ENCODE measurements at regions of chr17 and their contacts with region 1.

Region 1: GRCh38 chr17:72592242-72592966 is 471.6 kb downstream of the SOX9 start:
- DNase-seq: peak; percentile 90 to 97
- ATAC-seq: peak; percentile 72 to 86
- H3K4me3 ChIP-seq: peak overlapping the region; percentile 78
- H3K27ac ChIP-seq: peak overlapping the region; percentile 80 to 91
- H3K4me1 ChIP-seq: peaks cover 28% of the 10 kb centered on the region
- CTCF ChIP-seq: no peak
- EP300 ChIP-seq: no peak
- POLR2A ChIP-seq: peak; percentile 100
- RAD21 ChIP-seq: peak; percentile 28 to 67; a peak in 4 of 5 replicates

Region 2: GRCh38 chr17:72318131-72318530 is 274.3 kb before region 1 on chr17:
- CTCF ChIA-PET with region 1: no interaction called
- POLR2A ChIA-PET with region 1: no interaction called
- DNase-seq: no peak
- ATAC-seq: no peak
- H3K4me3 ChIP-seq: no peak overlapping the region
- H3K27ac ChIP-seq: no peak overlapping the region
- H3K4me1 ChIP-seq: peaks cover 4% of the 10 kb centered on the region; the same call in 1 of the 3 replicates
- CTCF ChIP-seq: no peak
- EP300 ChIP-seq: no peak
- POLR2A ChIP-seq: no peak
- RAD21 ChIP-seq: no peak

Region 3: GRCh38 chr17:72479113-72479512 is 113.3 kb before region 1 on chr17:
- CTCF ChIA-PET with region 1: no interaction called
- POLR2A ChIA-PET with region 1: no interaction called
- DNase-seq: peak in 1 of 2 experiments; percentile 51
- ATAC-seq: peak; percentile 22 to 54; a peak in 3 of 6 replicates
- H3K4me3 ChIP-seq: no peak overlapping the region
- H3K27ac ChIP-seq: no peak overlapping the region
- H3K4me1 ChIP-seq: peaks cover 41% of the 10 kb centered on the region
- CTCF ChIP-seq: peak; percentile 26
- EP300 ChIP-seq: no peak
- POLR2A ChIP-seq: no peak
- RAD21 ChIP-seq: peak; percentile 33 to 49; a peak in 3 of 5 replicates

Region 4: DNA sequence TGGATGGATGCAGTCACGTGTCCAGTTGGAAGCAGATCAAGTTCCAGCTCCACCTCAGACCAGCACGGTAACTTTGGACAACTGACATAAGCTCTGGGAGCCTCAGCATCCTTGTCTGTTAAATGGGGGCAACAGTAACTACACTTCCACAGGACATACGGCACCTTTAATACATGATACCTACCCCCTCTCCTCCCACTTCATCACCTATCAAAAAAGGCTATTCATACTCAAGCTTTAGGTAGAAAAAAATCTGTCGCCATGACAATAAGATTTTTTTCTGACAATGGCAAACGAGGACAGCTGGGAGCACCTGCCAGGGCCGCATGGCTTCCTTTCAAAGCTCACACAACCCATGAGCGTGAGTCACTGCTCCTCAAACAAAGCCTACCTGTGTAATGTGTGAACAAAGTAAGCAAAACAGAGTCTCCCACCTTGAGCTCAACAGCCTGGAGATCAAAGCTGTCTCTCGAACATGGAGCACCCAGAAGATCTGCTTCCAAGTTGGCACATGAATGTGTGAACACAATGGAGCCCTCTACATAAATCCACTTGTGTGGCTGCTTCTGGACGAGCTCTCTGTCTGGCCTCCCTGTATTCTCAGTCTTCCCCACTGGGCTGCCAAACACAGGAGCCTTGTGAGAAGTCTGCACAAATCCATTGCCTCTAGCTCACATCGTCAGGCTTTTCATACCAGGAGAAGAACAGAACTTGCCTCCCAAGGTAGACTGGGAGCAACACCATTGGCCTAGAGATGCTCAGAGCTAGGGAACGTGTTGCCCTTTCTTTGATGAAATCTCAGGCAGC is 11.9 kb before region 1 on chr17:
- CTCF ChIA-PET with region 1: interaction called, 5 read pairs
- POLR2A ChIA-PET with region 1: interaction called, 25 read pairs
- DNase-seq: peak in 1 of 2 experiments; percentile 50
- ATAC-seq: peak; percentile 42 to 47
- H3K4me3 ChIP-seq: no peak overlapping the region
- H3K27ac ChIP-seq: peak overlapping the region in 1 of 2 experiments; percentile 45; a peak in 3 of 6 replicates
- H3K4me1 ChIP-seq: peaks cover 58% of the 10 kb centered on the region
- CTCF ChIP-seq: no peak
- EP300 ChIP-seq: no peak
- POLR2A ChIP-seq: no peak
- RAD21 ChIP-seq: no peak

Region 5: GRCh38 chr17:72609501-72609900 is 17.1 kb after region 1 on chr17:
- CTCF ChIA-PET with region 1: interaction called, 8 read pairs
- POLR2A ChIA-PET with region 1: interaction called, 177 read pairs
- DNase-seq: peak; percentile 64 to 80
- ATAC-seq: peak in 1 of 2 experiments; percentile 46; a peak in 4 of 6 replicates
- H3K4me3 ChIP-seq: no peak overlapping the region
- H3K27ac ChIP-seq: peak overlapping the region; percentile 82 to 89
- H3K4me1 ChIP-seq: peaks cover 64% of the 10 kb centered on the region
- CTCF ChIP-seq: no peak
- EP300 ChIP-seq: peak in 1 of 2 experiments; percentile 24; a peak in 1 of 5 replicates
- POLR2A ChIP-seq: no peak
- RAD21 ChIP-seq: no peak; a peak in 1 of 5 replicates

Region 6: DNA sequence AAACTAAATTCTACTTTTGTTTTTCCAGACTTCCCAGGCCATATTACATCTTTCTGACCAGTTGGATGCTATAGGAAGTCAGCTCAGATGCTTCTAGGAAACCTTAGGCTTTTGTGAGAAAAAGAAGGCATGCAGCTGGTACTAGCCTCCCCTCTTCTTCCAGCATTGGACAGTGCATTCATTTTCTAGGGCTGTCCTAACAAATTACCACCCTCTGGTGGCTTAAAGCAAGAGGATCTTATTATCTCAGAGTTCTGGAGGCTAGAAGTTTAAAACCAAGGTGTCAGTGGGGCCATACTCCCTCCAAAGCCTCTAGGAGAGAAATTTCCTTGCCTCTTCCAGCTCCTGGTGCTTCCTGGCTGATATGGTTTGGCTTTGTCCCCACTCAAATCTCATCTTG is 32.2 kb after region 1 on chr17:
- CTCF ChIA-PET with region 1: interaction called, 10 read pairs
- POLR2A ChIA-PET with region 1: interaction called, 6 read pairs
- DNase-seq: no peak
- ATAC-seq: peak in 1 of 2 experiments; percentile 48; a peak in 2 of 6 replicates
- H3K4me3 ChIP-seq: no peak overlapping the region
- H3K27ac ChIP-seq: peak overlapping the region; percentile 12 to 22; a peak in 3 of 6 replicates
- H3K4me1 ChIP-seq: 0 out of 3 replicates have a peak, but pooled peaks cover 3% of the 10 kb centered on the region
- CTCF ChIP-seq: no peak
- EP300 ChIP-seq: no peak
- POLR2A ChIP-seq: no peak
- RAD21 ChIP-seq: peak; percentile 23; a peak in 2 of 5 replicates

Region 7: GRCh38 chr17:72683506-72684404 is 91.4 kb after region 1 on chr17:
- CTCF ChIA-PET with region 1: interaction called, 25 read pairs
- POLR2A ChIA-PET with region 1: interaction called, 82 read pairs
- DNase-seq: peak; percentile 98 to 100
- ATAC-seq: peak; percentile 91 to 94
- H3K4me3 ChIP-seq: peak overlapping the region; percentile 6; the same call in 1 of the 3 replicates
- H3K27ac ChIP-seq: peak overlapping the region; percentile 89 to 94
- H3K4me1 ChIP-seq: peaks cover 48% of the 10 kb centered on the region
- CTCF ChIP-seq: no peak
- EP300 ChIP-seq: peak; percentile 96 to 97
- POLR2A ChIP-seq: no peak
- RAD21 ChIP-seq: peak; percentile 57 to 80

Region 8: DNA sequence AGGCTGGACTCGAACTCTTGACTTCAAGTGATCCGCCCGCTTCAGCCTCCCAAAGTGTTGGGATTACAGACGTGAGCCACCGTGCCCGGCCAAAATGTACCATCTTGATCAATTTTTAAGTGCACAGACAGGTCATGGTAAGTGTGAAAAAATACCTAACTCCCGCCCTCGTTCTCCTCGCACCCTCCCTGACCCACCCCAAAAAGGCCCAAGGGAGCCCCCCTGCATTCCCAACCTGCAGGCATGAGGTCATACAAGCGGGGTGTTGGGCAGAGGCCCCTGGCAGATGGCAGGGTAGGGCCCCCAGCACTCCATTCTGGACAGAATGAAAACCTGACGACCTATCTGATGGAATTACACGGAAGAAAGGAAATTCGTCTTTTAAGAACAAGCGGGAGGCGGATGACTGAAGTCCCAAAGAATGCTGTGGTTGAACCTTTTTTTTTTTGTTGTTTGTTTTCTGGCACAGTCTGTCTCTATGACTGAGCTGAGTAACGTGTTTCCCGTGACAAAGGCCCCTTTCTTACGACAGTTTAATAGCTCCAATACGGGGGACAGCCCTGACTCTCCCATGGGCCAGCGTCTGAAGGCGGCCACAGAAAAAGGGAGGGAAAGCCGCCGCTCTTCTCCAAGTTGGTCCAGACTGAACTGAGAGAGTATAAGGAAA is 123.6 kb after region 1 on chr17:
- CTCF ChIA-PET with region 1: interaction called, 4 read pairs
- POLR2A ChIA-PET with region 1: interaction called, 28 read pairs
- DNase-seq: peak; percentile 93 to 97
- ATAC-seq: peak; percentile 86 to 89
- H3K4me3 ChIP-seq: no peak overlapping the region
- H3K27ac ChIP-seq: peak overlapping the region; percentile 84 to 85
- H3K4me1 ChIP-seq: peaks cover 41% of the 10 kb centered on the region
- CTCF ChIP-seq: no peak
- EP300 ChIP-seq: peak; percentile 97 to 98
- POLR2A ChIP-seq: no peak
- RAD21 ChIP-seq: peak; percentile 52 to 70; a peak in 4 of 5 replicates

Measured in A549 (cell line).